Activated naive CD4-positive, alpha-beta T cell treated with anti-CD3 and anti-CD28 coated beads for 36 hours (primary cell): ENCODE measurements at regions of chr3 and their contacts with region 1.

Region 1: GRCh38 chr3:189529468-189529867 is 101.7 kb upstream of the TP63 start:
- DNase-seq: no peak
- H3K4me3 Mint-ChIP-seq: no peak overlapping the region
- H3K27ac Mint-ChIP-seq: peak overlapping the region; percentile 74
- H3K4me1 Mint-ChIP-seq: peaks cover 46% of the 10 kb centered on the region
- H3K27me3 Mint-ChIP-seq: no peaks in the 10 kb centered on the region

Region 2: DNA sequence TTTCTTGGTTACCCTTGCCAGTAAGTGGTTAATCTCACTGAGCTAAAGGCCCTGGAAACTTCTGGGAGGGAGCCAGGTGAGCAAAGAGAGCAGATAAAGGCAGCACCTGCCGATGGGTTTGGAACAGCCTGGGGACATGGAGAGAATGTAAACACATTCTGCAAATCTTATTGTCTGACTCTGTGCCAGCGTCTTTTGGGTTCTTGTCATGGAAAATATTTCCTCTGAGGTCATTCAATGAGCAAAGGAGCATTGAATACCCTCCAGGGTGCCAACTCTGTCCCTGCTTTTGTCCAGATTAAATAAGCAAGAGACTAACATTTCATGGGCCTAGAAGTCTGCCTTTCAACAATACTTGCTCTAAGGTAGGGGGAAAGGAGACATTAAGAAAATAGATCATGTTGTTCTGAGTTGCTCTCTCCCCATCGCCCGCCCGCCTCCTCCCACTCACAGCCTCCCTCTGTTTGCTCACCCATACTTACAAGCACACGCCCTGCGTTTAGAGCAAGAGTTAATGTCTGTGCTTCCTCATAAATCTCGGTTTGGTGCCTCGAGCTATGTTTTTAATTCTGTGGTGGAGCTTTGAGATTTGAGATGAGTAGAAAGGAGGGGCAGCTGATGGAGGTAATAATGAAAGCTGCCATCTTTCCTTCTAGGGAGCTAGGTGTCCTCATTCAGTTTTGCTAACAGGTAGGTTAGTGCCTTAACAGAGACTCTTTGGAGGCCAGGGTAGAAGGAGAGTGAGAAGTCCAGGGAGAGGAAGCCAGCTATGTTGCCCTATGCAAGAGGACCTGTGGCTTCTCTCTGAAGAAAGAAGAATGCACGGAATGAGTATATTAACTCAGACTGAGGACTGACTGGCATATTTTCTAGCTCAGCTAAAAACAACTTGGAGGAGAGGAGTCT is 224.8 kb before region 1 on chr3:
- CTCF ChIA-PET with region 1: no interaction called
- intact Hi-C with region 1: loop called (anchors 1 kb)
- DNase-seq: peak; percentile 59
- H3K4me3 Mint-ChIP-seq: peak overlapping the region; percentile 17
- H3K27ac Mint-ChIP-seq: peak overlapping the region; percentile 68
- H3K4me1 Mint-ChIP-seq: peaks cover 57% of the 10 kb centered on the region
- H3K27me3 Mint-ChIP-seq: no peaks in the 10 kb centered on the region

Region 3: DNA sequence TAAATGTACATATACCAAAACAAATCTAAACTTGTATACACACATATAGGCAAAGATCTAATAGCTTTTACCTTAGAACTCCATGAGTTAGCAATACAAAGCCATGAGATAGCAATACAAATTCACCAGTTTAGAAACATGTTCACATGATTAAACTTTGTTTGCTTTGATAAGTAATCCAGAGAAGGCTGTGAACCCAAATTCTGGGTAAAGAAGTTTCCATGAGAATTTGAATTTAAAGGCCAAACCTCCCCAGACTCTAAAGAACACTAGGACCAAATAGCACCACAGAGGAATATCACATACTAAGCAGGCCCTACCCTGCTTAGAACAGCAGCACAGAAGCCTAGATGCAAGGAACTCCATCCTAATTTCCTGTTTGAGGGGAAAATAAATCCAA is 18.0 kb after region 1 on chr3:
- CTCF ChIA-PET with region 1: no interaction called
- intact Hi-C with region 1: no loop called
- DNase-seq: no peak
- H3K4me3 Mint-ChIP-seq: no peak overlapping the region
- H3K27ac Mint-ChIP-seq: no peak overlapping the region
- H3K4me1 Mint-ChIP-seq: no peaks in the 10 kb centered on the region
- H3K27me3 Mint-ChIP-seq: no peaks in the 10 kb centered on the region

Region 4: GRCh38 chr3:189563866-189564563 is 34.5 kb after region 1 on chr3:
- CTCF ChIA-PET with region 1: no interaction called
- intact Hi-C with region 1: loop called (anchors 1 kb)
- DNase-seq: peak; percentile 79
- H3K4me3 Mint-ChIP-seq: no peak overlapping the region
- H3K27ac Mint-ChIP-seq: no peak overlapping the region
- H3K4me1 Mint-ChIP-seq: peaks cover 16% of the 10 kb centered on the region
- H3K27me3 Mint-ChIP-seq: no peaks in the 10 kb centered on the region

Region 5: DNA sequence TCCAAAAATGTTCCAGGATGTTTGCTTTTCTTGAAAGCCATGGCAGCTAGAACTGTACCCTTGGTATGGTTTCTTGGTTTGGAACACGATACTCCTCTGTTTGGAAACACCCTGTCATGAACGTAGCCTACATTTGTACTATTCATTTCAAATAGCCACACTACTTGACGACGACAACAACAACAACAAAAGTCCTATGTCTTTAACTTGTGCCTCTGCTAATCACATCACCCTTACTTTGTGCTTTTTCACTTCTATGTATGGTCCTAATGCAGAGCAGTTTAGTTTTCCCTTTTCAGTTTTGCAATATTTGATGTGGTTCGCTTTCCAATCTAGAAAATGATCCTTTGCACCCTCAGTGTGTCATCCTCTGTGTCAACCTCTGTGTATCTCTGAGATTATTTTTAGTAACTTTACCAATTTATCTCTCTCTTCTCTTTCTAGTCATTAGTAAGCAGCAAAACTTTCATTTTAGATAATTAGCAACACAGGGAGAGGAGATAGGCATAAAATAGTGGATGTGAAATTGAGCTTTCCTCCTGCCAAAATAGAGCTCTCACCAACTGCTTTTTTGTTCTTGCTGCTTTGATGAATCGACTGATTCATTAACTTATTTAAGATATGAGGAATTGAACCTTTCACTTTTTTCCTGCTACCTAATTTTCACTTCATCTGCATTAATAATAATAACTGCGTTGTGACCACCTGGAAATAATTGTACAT is 57.6 kb after region 1 on chr3:
- CTCF ChIA-PET with region 1: no interaction called
- intact Hi-C with region 1: loop called (anchors 1 kb)
- DNase-seq: no peak
- H3K4me3 Mint-ChIP-seq: no peak overlapping the region
- H3K27ac Mint-ChIP-seq: peak overlapping the region; percentile 15
- H3K4me1 Mint-ChIP-seq: peaks cover 28% of the 10 kb centered on the region
- H3K27me3 Mint-ChIP-seq: peaks cover 6% of the 10 kb centered on the region

Region 6: GRCh38 chr3:189841473-189842210 is 312.2 kb after region 1 on chr3:
- CTCF ChIA-PET with region 1: no interaction called
- intact Hi-C with region 1: loop called (anchors 1 kb)
- DNase-seq: peak; percentile 8
- H3K4me3 Mint-ChIP-seq: no peak overlapping the region
- H3K27ac Mint-ChIP-seq: peak overlapping the region; percentile 59
- H3K4me1 Mint-ChIP-seq: peaks cover 21% of the 10 kb centered on the region
- H3K27me3 Mint-ChIP-seq: no peaks in the 10 kb centered on the region

Region 7: DNA sequence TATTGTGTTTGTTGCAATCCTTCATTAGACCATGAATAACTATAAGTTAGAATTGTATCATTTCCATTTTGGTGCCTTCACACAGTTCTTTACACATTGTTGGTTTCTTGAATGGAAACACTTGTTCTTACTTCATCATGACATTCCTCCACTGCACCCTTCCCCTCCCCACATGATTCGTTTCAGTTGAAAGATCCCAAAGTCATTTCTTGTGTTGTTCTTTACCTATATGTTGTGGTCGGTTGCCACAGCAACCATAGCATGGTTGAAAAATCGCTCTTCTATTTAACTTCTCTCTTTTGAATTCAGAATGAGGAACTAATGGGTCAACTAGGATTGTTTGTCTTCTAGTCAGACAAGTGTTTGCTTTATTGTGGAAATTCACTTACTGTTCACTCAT is 1087.7 kb after region 1 on chr3:
- CTCF ChIA-PET with region 1: no interaction called
- intact Hi-C with region 1: loop called (anchors 1 kb)
- DNase-seq: peak; percentile 62
- H3K4me3 Mint-ChIP-seq: no peak overlapping the region
- H3K27ac Mint-ChIP-seq: peak overlapping the region; percentile 95
- H3K4me1 Mint-ChIP-seq: peaks cover 48% of the 10 kb centered on the region
- H3K27me3 Mint-ChIP-seq: no peaks in the 10 kb centered on the region